Dorsolateral prefrontal cortex (tissue), 120 donors: ENCODE measurements at regions of chr4 and their contacts with region 1.

Region 1: GRCh38 chr4:183504064-183504929 is 561 bp upstream of the ING2 start:
- DNase-seq: peak; percentile 97 to 100 (median 98)
- H3K4me3 ChIP-seq: peak overlapping the region; percentile 70 to 100 (median 93)
- H3K27ac ChIP-seq: peak overlapping the region; percentile 88 to 100 (median 98)
- H3K27me3 ChIP-seq: no peaks in the 10 kb centered on the region
- CTCF ChIP-seq: peak in 40 of 56 donors; percentile 12 to 59 (median 41)

Region 2: GRCh38 chr4:183444214-183445066 is 59.9 kb before region 1 on chr4 and contains the start of gene CDKN2AIP:
- intact Hi-C with region 1: loop called (anchors 1 kb)
- DNase-seq: peak; percentile 80 to 93 (median 86)
- H3K4me3 ChIP-seq: peak within 1 kb of the TSS; percentile 66 to 100 (median 94)
- H3K27ac ChIP-seq: peak within 1 kb of the TSS; percentile 91 to 99 (median 98)
- H3K27me3 ChIP-seq: no peaks in the 10 kb centered on the region
- CTCF ChIP-seq: peak in 42 of 56 donors; percentile 4 to 68 (median 36)
- total RNA-seq, gene CDKN2AIP: 10.3 to 20.2 (median 14.8) TPM

Region 3: GRCh38 chr4:183659029-183659871 is 155.0 kb after region 1 on chr4 and contains the starts of genes RWDD4 and TRAPPC11:
- intact Hi-C with region 1: loop called (anchors 2 kb)
- DNase-seq: peak; percentile 96 to 99 (median 97)
- H3K4me3 ChIP-seq: peak within 1 kb of the TSS; percentile 46 to 97 (median 90)
- H3K27ac ChIP-seq: peak within 1 kb of the TSS in 58 of 59 donors; percentile 3 to 95 (median 86)
- H3K27me3 ChIP-seq: no peaks in the 10 kb centered on the region
- CTCF ChIP-seq: peak in 38 of 56 donors; percentile 7 to 56 (median 33)
- total RNA-seq, gene RWDD4: 6.1 to 15.7 (median 10.6) TPM
- total RNA-seq, gene TRAPPC11: 32.4 to 73.9 (median 52.2) TPM

Region 4: DNA sequence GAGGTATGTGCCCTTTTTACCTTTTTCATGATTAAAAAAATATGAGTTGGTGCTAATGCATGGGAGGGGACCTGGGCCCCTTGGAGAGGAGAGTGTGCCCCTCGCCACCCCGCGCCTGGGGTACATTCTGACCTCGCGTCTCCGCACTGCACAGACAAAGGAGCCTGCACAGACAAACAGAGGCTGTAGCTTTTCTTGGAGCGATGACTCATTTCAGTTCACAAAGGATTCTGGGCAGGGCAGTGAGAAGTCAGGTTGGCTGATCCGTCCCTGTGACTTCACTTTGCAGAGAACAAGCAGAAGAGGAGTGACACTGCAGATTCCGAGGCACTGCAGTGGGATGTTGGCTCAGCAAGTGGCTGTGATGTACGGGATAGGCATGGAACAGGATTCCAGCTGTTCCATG is 483.7 kb after region 1 on chr4:
- intact Hi-C with region 1: loop called in 1 of 2 experiments (anchors 5 kb)
- DNase-seq: peak; percentile 33 to 91 (median 74)
- H3K4me3 ChIP-seq: peak overlapping the region; percentile 29 to 75 (median 57)
- H3K27ac ChIP-seq: peak overlapping the region; percentile 18 to 95 (median 88)
- H3K27me3 ChIP-seq: no peaks in the 10 kb centered on the region
- CTCF ChIP-seq: peak in 2 of 56 donors; percentile 11 to 17

Region 5: GRCh38 chr4:184649026-184649970 is 1145.0 kb after region 1 on chr4 and contains the starts of genes CASP3 and PRIMPOL:
- intact Hi-C with region 1: loop called in 1 of 2 experiments (anchors 5 kb)
- DNase-seq: peak; percentile 93 to 99 (median 96)
- H3K4me3 ChIP-seq: peak within 1 kb of the TSS; percentile 60 to 97 (median 89)
- H3K27ac ChIP-seq: peak within 1 kb of the TSS; percentile 55 to 98 (median 94)
- H3K27me3 ChIP-seq: no peaks in the 10 kb centered on the region
- CTCF ChIP-seq: peak in 51 of 56 donors; percentile 14 to 67 (median 44)
- total RNA-seq, gene CASP3: 6.4 to 17.2 (median 12.2) TPM
- total RNA-seq, gene PRIMPOL: 9.5 to 30.5 (median 17.5) TPM